Activated CD4-positive, alpha-beta memory T cell treated with anti-CD3 and anti-CD28 coated beads for 36 hours (primary cell): ENCODE measurements at regions of chr7 and their contacts with region 1.

Region 1: GRCh38 chr7:56051339-56052191 is at the starts of genes CCT6A and PSPH:
- DNase-seq: peak; percentile 94
- H3K4me3 Mint-ChIP-seq: peak within 1 kb of the TSS; percentile 95
- H3K27ac Mint-ChIP-seq: peak within 1 kb of the TSS; percentile 94
- H3K4me1 Mint-ChIP-seq: peaks cover 36% of the 10 kb centered on the region
- H3K27me3 Mint-ChIP-seq: no peaks in the 10 kb centered on the region
- total RNA-seq, gene CCT6A: 222 to 230 TPM
- total RNA-seq, gene PSPH: 16.3 to 20.9 TPM

Region 2: DNA sequence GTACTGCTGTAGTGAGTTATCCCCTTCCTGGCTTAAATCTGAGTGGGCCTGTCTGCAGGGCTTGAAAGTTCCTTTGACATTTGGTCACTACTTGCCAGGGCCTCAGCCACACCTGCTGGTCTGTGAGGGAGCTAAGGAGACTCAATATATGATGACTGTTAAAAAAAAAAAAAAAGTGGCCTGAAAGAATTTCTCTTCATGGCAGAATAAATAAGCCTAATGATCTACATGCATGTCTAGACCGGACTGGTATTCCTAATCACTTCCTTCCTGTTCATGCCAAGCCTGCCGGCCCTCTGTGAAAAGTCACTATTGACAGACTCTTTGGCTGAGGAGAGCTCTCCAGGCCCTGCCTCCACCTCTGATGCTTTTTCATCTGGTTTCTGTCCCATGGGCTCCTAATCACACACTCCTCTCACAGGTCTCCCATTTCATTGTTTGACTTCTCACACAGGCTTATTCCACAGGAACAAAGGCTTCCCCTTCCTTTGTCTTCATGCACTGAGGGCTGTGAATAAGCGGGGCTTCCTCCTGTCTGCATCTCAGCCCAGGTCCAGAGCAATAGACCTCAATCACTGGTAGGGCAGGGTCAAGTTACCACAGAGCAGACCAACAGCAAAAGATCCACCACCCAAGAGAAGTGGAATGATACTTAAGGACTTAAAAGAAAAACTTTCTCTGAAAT is 1193.4 kb before region 1 on chr7:
- CTCF ChIA-PET with region 1: no interaction called
- POLR2A ChIA-PET with region 1: no interaction called
- intact Hi-C with region 1: no loop called
- DNase-seq: no peak
- H3K4me3 Mint-ChIP-seq: no peak overlapping the region
- H3K27ac Mint-ChIP-seq: no peak overlapping the region
- H3K4me1 Mint-ChIP-seq: no peaks in the 10 kb centered on the region
- H3K27me3 Mint-ChIP-seq: peaks cover 21% of the 10 kb centered on the region

Region 3: GRCh38 chr7:55887821-55888247 is 163.7 kb before region 1 on chr7:
- CTCF ChIA-PET with region 1: no interaction called
- POLR2A ChIA-PET with region 1: no interaction called
- intact Hi-C with region 1: loop called (anchors 1 kb)
- DNase-seq: no peak
- H3K4me3 Mint-ChIP-seq: peak overlapping the region; percentile 76
- H3K27ac Mint-ChIP-seq: peak overlapping the region; percentile 74
- H3K4me1 Mint-ChIP-seq: peaks cover 4% of the 10 kb centered on the region
- H3K27me3 Mint-ChIP-seq: no peaks in the 10 kb centered on the region

Region 4: GRCh38 chr7:55964261-55965099 is 87.1 kb before region 1 on chr7 and contains the start of gene NIPSNAP2:
- CTCF ChIA-PET with region 1: interaction called, 5 read pairs
- POLR2A ChIA-PET with region 1: interaction called, 4 read pairs
- intact Hi-C with region 1: loop called (anchors 2 kb)
- DNase-seq: peak; percentile 67
- H3K4me3 Mint-ChIP-seq: peak within 1 kb of the TSS; percentile 84
- H3K27ac Mint-ChIP-seq: peak within 1 kb of the TSS; percentile 85
- H3K4me1 Mint-ChIP-seq: peaks cover 32% of the 10 kb centered on the region
- H3K27me3 Mint-ChIP-seq: no peaks in the 10 kb centered on the region
- total RNA-seq, gene NIPSNAP2: 55.7 to 57.4 TPM

Region 5: DNA sequence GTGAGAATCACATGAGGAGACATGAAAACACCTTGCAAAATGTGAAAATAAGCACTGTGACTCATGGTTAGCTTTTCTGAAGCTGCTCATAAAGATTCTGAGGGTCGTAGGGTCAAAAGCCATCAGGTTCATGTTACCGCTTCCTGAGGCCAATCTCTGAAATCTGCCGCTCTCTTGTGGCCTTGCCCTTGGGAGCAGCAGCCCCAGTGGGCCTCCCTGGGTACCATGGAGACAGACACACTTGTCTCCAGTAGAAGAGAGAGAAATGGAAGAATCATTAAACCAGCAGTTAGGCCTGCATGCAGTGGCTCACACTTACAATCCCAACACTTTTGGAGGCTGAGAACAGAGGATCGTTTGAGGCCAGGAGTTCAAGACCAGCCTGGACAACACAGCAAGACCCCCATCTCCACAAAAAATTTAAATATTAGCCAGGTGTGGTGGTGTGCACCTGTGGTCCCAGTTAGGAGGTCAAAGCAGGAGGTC is 44.4 kb before region 1 on chr7:
- CTCF ChIA-PET with region 1: no interaction called
- POLR2A ChIA-PET with region 1: no interaction called
- intact Hi-C with region 1: loop called (anchors 2 kb)
- DNase-seq: peak; percentile 17
- H3K4me3 Mint-ChIP-seq: no peak overlapping the region
- H3K27ac Mint-ChIP-seq: no peak overlapping the region
- H3K4me1 Mint-ChIP-seq: no peaks in the 10 kb centered on the region
- H3K27me3 Mint-ChIP-seq: no peaks in the 10 kb centered on the region

Region 6: GRCh38 chr7:56033671-56034432 is 17.7 kb before region 1 on chr7:
- CTCF ChIA-PET with region 1: interaction called, 5 read pairs
- POLR2A ChIA-PET with region 1: interaction called, 7 read pairs
- intact Hi-C with region 1: loop called (anchors 1 kb)
- DNase-seq: peak; percentile 72
- H3K4me3 Mint-ChIP-seq: peak overlapping the region; percentile 75
- H3K27ac Mint-ChIP-seq: peak overlapping the region; percentile 43
- H3K4me1 Mint-ChIP-seq: peaks cover 8% of the 10 kb centered on the region
- H3K27me3 Mint-ChIP-seq: no peaks in the 10 kb centered on the region

Region 7: GRCh38 chr7:56063882-56064625 is 12.5 kb after region 1 on chr7 and contains the start of gene SUMF2:
- CTCF ChIA-PET with region 1: interaction called, 17 read pairs
- POLR2A ChIA-PET with region 1: interaction called, 13 read pairs
- intact Hi-C with region 1: loop called (anchors 1 kb)
- DNase-seq: peak; percentile 92
- H3K4me3 Mint-ChIP-seq: peak within 1 kb of the TSS; percentile 87
- H3K27ac Mint-ChIP-seq: peak within 1 kb of the TSS; percentile 86
- H3K4me1 Mint-ChIP-seq: peaks cover 40% of the 10 kb centered on the region
- H3K27me3 Mint-ChIP-seq: peaks cover 1% of the 10 kb centered on the region
- total RNA-seq, gene SUMF2: 130 to 133 TPM

Region 8: DNA sequence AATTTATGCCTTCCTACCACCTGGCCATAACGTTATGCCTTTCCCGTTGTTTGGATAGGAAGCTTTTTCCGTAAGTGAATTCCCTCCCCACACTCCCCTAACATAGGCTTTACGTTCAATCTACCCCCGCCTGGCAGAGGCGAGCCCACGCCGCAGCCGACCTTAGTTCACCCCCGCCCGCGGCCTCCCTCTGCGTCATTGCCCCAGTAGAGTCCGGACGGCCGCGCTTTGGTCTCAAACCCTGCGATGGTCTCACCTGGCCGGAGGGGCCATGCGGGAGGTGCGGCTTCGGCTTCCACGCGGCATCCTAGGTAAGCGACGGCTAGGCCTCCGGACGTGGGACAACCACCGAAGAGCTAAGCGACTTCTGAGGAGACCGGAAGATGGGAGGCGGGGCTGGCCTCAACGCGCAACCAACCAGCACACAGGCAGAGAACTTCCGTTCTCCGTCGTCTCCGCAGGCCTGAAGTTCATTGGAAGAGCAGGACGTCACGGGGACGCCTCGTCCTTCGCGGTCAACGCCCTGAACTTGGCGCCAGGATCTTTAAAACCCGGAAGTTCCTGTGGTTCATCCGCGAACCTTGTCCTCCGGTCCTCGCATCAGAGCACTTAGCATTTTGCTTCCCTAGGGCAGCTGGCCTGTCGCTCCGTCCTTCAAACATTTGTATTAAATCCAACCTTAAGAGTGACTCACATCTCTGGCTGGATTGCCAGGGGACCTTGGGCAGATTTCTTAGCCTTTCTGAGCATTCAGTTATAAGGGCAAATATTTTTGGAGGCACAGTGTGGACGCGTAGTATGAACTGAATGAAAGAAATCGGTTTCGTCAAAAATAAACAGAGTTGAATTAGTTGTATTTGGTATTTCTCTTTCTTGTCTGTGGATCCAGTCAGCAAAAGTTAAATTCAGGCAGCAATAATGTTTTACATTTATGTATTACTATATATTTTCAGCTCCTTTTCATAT is 54.8 kb after region 1 on chr7 and contains the start of gene CHCHD2:
- CTCF ChIA-PET with region 1: no interaction called
- POLR2A ChIA-PET with region 1: interaction called, 12 read pairs
- intact Hi-C with region 1: loop called (anchors 1 kb)
- DNase-seq: peak; percentile 97
- H3K4me3 Mint-ChIP-seq: peak within 1 kb of the TSS; percentile 97
- H3K27ac Mint-ChIP-seq: peak within 1 kb of the TSS; percentile 94
- H3K4me1 Mint-ChIP-seq: peaks cover 30% of the 10 kb centered on the region
- H3K27me3 Mint-ChIP-seq: no peaks in the 10 kb centered on the region
- total RNA-seq, gene CHCHD2: 764 to 766 TPM